ENCODE measurements at regions of chr3 and their contacts with region 1.

Region 1: GRCh38 chr3:58025837-58026569 is 17.8 kb downstream of the FLNB start:
- DNase-seq: no peak
- ATAC-seq: no peak
- H3K4me3 Mint-ChIP-seq: no peak overlapping the region
- H3K27ac Mint-ChIP-seq: peak overlapping the region; percentile 98
- H3K4me1 Mint-ChIP-seq: peaks cover 84% of the 10 kb centered on the region
- H3K27me3 Mint-ChIP-seq: no peaks in the 10 kb centered on the region
- CTCF ChIP-seq: no peak

Region 2: DNA sequence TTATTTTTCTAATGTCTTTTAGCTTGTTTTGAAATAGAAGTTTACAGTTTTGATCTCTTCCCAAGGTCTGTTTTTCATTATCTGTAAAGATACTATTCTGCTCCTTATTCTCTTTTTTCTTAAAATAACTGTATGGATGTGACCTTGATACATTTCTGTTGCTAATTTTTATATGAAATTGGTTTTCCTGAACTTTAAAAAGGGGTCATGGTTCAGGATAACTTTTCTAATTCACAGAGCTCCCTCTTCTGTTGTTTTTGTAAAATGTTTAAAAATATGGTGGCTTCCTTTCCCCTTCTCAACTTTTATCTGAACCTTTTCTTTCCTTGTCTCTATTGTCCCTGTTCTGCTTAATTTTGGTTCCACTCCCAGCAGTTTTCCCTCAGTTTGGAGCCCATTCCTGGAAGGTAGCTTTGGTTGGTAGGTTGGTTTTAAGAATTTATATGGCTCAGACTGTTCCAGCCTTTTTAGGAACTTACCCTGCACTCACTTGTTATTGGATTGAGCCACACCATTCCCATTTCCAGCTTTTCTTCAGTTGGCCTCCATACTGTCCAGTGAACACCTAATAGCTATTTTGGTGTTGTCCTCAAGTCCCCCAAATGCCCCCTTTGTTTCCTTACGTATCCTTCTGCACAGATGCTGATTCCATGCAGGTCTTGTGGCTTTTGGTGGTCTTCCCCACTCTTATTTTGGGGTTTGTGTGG is 199.6 kb before region 1 on chr3:
- CTCF ChIA-PET with region 1: no interaction called
- POLR2A ChIA-PET with region 1: no interaction called
- DNase-seq: no peak
- ATAC-seq: no peak
- H3K4me3 Mint-ChIP-seq: no peak overlapping the region
- H3K27ac Mint-ChIP-seq: peak overlapping the region; percentile 48
- H3K4me1 Mint-ChIP-seq: peaks cover 66% of the 10 kb centered on the region
- H3K27me3 Mint-ChIP-seq: no peaks in the 10 kb centered on the region
- CTCF ChIP-seq: no peak

Region 3: GRCh38 chr3:58052373-58053273 is 26.6 kb after region 1 on chr3:
- CTCF ChIA-PET with region 1: no interaction called
- POLR2A ChIA-PET with region 1: interaction called, 13 read pairs
- DNase-seq: no peak
- ATAC-seq: no peak
- H3K4me3 Mint-ChIP-seq: no peak overlapping the region
- H3K27ac Mint-ChIP-seq: peak overlapping the region; percentile 57; the same call in 1 of the 2 replicates
- H3K4me1 Mint-ChIP-seq: peaks cover 54% of the 10 kb centered on the region
- H3K27me3 Mint-ChIP-seq: no peaks in the 10 kb centered on the region
- CTCF ChIP-seq: no peak

Region 4: GRCh38 chr3:58059349-58060321 is 33.6 kb after region 1 on chr3:
- CTCF ChIA-PET with region 1: interaction called, 10 read pairs
- POLR2A ChIA-PET with region 1: no interaction called
- DNase-seq: no peak
- ATAC-seq: peak; percentile 35
- H3K4me3 Mint-ChIP-seq: no peak overlapping the region
- H3K27ac Mint-ChIP-seq: peak overlapping the region; percentile 87
- H3K4me1 Mint-ChIP-seq: peaks cover 60% of the 10 kb centered on the region
- H3K27me3 Mint-ChIP-seq: no peaks in the 10 kb centered on the region
- CTCF ChIP-seq: no peak

Region 5: GRCh38 chr3:58222094-58222724 is 196.2 kb after region 1 on chr3:
- CTCF ChIA-PET with region 1: no interaction called
- POLR2A ChIA-PET with region 1: no interaction called
- DNase-seq: no peak
- ATAC-seq: no peak
- H3K4me3 Mint-ChIP-seq: no peak overlapping the region
- H3K27ac Mint-ChIP-seq: no peak overlapping the region
- H3K4me1 Mint-ChIP-seq: peaks cover 8% of the 10 kb centered on the region
- H3K27me3 Mint-ChIP-seq: no peaks in the 10 kb centered on the region; the same call in 1 of the 2 replicates
- CTCF ChIP-seq: no peak